ENCODE measurements at regions of chr6 and their contacts with region 1.

Region 1: GRCh38 chr6:16409531-16410441 is 171.4 kb downstream of the GMPR start:
- DNase-seq: peak; percentile 75
- ATAC-seq: peak; percentile 64
- H3K4me3 ChIP-seq: no peak overlapping the region
- H3K4me3 Mint-ChIP-seq: peak overlapping the region; percentile 53
- H3K27ac ChIP-seq: no peak overlapping the region
- H3K27ac Mint-ChIP-seq: peak overlapping the region; percentile 66
- H3K4me1 ChIP-seq: peaks cover 10 to 50% of the 10 kb centered on the region in 2 donors
- H3K4me1 Mint-ChIP-seq: peaks cover 60% of the 10 kb centered on the region
- H3K27me3 ChIP-seq: no peaks in the 10 kb centered on the region
- H3K27me3 Mint-ChIP-seq: no peaks in the 10 kb centered on the region
- CTCF ChIP-seq: peak; percentile 77

Region 2: DNA sequence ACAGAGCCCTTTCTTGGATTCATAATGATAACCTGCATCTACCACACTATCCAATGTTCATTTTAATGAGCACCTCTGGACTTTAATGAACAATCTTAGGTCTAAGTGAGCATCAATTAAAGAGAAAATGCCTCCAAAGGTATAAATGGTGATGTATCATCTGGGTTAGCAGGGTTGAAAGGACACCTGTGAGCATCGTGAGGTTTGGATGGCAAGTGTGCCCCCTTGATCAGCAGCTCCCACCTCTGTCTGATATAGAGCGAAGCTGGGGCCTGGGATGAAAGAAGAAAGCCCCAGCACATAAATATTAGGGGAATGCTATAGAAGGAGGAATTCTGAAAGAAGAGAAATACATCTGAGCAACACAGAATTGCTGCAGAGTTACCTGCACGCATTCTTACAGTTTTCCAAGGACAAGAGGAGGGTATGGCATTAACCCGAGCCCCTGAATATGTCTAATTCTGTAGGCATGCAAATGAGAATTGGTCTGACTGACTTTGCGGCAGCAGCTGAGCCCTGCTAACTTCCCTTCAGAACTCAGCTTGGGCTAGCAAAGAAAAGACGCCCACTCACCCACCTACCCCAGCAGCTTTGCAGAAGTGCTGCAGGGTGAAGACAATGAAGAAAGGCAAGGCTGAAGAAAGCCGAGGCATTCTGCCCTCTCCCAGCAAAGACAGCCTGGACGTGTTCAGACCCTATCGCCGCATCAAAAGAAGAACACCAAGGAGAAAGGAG is 35.2 kb before region 1 on chr6:
- CTCF ChIA-PET with region 1: interaction called, 9 read pairs
- POLR2A ChIA-PET with region 1: no interaction called
- intact Hi-C with region 1: loop called (anchors 2 kb)
- DNase-seq: peak; percentile 53
- ATAC-seq: peak; percentile 84
- H3K4me3 ChIP-seq: no peak overlapping the region
- H3K4me3 Mint-ChIP-seq: peak overlapping the region; percentile 76
- H3K27ac ChIP-seq: peak overlapping the region in 1 of 2 donors; percentile 40
- H3K27ac Mint-ChIP-seq: peak overlapping the region; percentile 88
- H3K4me1 ChIP-seq: peaks cover 28 to 42% of the 10 kb centered on the region in 2 donors
- H3K4me1 Mint-ChIP-seq: peaks cover 66% of the 10 kb centered on the region
- H3K27me3 ChIP-seq: no peaks in the 10 kb centered on the region
- H3K27me3 Mint-ChIP-seq: no peaks in the 10 kb centered on the region
- CTCF ChIP-seq: no peak

Region 3: DNA sequence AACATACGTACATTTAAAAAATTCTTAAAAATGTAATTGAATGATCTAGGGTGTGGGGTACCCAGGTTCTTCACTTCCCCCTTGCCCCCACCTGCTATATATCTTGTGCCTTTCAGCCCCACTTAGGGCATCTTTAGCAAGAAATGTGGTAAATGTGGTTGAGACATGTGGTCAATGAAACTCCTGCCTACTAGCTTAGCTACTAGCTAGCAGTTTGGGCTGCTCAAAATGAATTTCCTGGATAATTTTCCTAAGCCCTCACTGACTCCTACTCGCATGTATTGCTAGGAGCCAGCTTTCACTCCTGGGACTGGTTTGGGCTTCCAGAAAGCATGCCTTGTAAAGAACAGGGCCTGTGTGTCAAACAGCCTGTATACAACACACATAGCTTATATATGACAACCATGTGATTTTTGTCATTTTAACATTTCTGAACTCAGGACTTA is 94.2 kb after region 1 on chr6:
- CTCF ChIA-PET with region 1: interaction called, 4 read pairs
- POLR2A ChIA-PET with region 1: no interaction called
- intact Hi-C with region 1: loop called (anchors 2 kb)
- DNase-seq: peak; percentile 57
- ATAC-seq: peak; percentile 66
- H3K4me3 ChIP-seq: no peak overlapping the region
- H3K4me3 Mint-ChIP-seq: peak overlapping the region; percentile 81
- H3K27ac ChIP-seq: no peak overlapping the region
- H3K27ac Mint-ChIP-seq: peak overlapping the region; percentile 90
- H3K4me1 ChIP-seq: peaks cover 12 to 14% of the 10 kb centered on the region in 2 donors
- H3K4me1 Mint-ChIP-seq: peaks cover 36% of the 10 kb centered on the region
- H3K27me3 ChIP-seq: no peaks in the 10 kb centered on the region
- H3K27me3 Mint-ChIP-seq: no peaks in the 10 kb centered on the region
- CTCF ChIP-seq: no peak

Region 4: GRCh38 chr6:16562498-16562897 is 152.7 kb after region 1 on chr6:
- CTCF ChIA-PET with region 1: no interaction called
- POLR2A ChIA-PET with region 1: interaction called, 11 read pairs
- intact Hi-C with region 1: no loop called
- DNase-seq: no peak
- ATAC-seq: no peak
- H3K4me3 ChIP-seq: no peak overlapping the region
- H3K4me3 Mint-ChIP-seq: no peak overlapping the region
- H3K27ac ChIP-seq: no peak overlapping the region
- H3K27ac Mint-ChIP-seq: no peak overlapping the region
- H3K4me1 ChIP-seq: no peaks in the 10 kb centered on the region
- H3K4me1 Mint-ChIP-seq: no peaks in the 10 kb centered on the region
- H3K27me3 ChIP-seq: no peaks in the 10 kb centered on the region
- H3K27me3 Mint-ChIP-seq: no peaks in the 10 kb centered on the region
- CTCF ChIP-seq: no peak

Measured in B cell (primary cell).